CD8-positive, alpha-beta T cell (primary cell): ENCODE measurements at regions of chr13 and their contacts with region 1.

Region 1: DNA sequence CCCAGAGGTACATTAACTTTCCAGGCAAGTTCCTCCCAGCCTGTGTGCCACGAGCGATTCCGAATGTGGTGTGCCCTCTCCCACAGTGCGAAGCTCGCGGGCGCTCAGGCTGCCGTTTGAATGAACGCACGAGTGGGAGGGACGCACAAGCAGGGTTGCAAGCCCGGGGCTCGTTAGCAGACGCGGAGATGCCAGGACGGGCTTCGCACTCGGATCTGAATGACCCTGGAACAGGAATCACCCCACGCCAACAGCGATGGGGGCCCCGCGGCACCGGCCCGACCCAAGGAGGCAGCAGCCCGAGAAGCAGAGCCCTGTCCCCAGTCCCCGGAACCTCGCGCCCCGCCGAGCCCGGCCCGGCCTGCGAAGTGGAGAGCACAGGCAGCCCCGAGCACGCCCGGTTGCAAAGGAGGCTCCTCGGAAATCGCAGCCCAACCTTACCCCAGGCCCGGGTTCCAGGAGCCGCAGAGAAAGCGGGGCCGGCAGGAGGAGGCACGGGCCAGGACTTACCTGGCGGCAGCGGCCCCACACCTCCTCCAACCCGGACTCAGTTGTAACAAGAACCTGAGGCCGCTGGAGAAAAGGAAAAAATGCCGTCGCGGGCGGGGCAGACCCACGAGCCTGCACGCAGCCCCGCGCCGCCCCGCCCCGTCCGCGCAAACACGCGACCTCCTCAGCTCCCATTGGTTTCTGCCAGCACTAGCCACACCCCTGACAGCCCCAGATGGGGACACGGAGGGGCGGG is at the start of gene SLC25A30:
- DNase-seq: peak; percentile 83 to 96 (median 91)
- ATAC-seq: peak; percentile 90
- H3K4me3 ChIP-seq: peak within 1 kb of the TSS; percentile 88 to 97
- H3K4me3 Mint-ChIP-seq: peak within 1 kb of the TSS; percentile 94
- H3K27ac ChIP-seq: peak within 1 kb of the TSS; percentile 81 to 85
- H3K27ac Mint-ChIP-seq: peak within 1 kb of the TSS; percentile 96
- H3K4me1 ChIP-seq: peaks cover 24% of the 10 kb centered on the region
- H3K4me1 Mint-ChIP-seq: peaks cover 32% of the 10 kb centered on the region
- H3K27me3 ChIP-seq: no peaks in the 10 kb centered on the region
- H3K27me3 Mint-ChIP-seq: no peaks in the 10 kb centered on the region
- CTCF ChIP-seq: no peak
- total RNA-seq, gene SLC25A30: 37.7 to 40.5 TPM

Region 2: GRCh38 chr13:44843403-44843802 is 574.6 kb before region 1 on chr13:
- CTCF ChIA-PET with region 1: no interaction called
- POLR2A ChIA-PET with region 1: no interaction called
- intact Hi-C with region 1: no loop called
- DNase-seq: no peak
- ATAC-seq: no peak
- H3K4me3 ChIP-seq: no peak overlapping the region
- H3K4me3 Mint-ChIP-seq: no peak overlapping the region
- H3K27ac ChIP-seq: no peak overlapping the region
- H3K27ac Mint-ChIP-seq: no peak overlapping the region
- H3K4me1 ChIP-seq: no peaks in the 10 kb centered on the region
- H3K4me1 Mint-ChIP-seq: no peaks in the 10 kb centered on the region
- H3K27me3 ChIP-seq: no peaks in the 10 kb centered on the region
- H3K27me3 Mint-ChIP-seq: peaks cover 4% of the 10 kb centered on the region
- CTCF ChIP-seq: no peak

Region 3: DNA sequence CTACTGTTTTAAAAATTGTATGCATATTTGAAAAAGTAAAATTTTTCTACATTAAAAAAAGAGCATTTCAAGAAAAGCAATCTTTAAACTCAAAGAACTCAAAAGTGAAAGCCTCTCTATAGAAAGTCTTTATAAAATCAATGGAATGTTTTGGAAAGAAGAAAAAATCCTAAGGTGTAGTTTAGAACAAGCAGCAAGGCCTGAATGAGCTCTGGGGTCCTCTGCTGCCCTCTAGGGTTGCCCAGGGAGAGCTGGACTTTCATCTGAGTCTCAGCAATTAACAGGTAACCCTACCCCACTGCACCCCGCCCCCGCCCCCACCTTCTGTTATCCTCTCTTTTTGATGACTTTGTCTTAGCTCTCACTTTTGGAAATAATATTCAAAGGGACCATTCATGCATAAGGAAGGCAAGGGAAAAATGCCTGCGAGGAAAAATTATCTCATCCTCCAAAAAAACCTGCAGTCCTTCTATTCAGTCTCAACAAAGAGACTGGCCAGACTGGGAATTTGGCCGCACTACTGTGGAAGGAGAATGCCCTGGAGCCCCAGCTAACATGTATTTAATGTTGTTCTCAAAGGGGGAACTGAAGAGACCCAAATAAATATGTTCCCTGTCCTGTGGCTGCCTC is 23.9 kb before region 1 on chr13:
- CTCF ChIA-PET with region 1: interaction called, 5 read pairs
- POLR2A ChIA-PET with region 1: interaction called, 36 read pairs
- intact Hi-C with region 1: loop called in 1 of 2 experiments (anchors 2 kb)
- DNase-seq: peak in 4 of 9 experiments; percentile 31 to 69 (median 48)
- ATAC-seq: no peak
- H3K4me3 ChIP-seq: no peak overlapping the region
- H3K4me3 Mint-ChIP-seq: no peak overlapping the region
- H3K27ac ChIP-seq: no peak overlapping the region
- H3K27ac Mint-ChIP-seq: no peak overlapping the region
- H3K4me1 ChIP-seq: peaks cover 43% of the 10 kb centered on the region
- H3K4me1 Mint-ChIP-seq: peaks cover 46% of the 10 kb centered on the region
- H3K27me3 ChIP-seq: no peaks in the 10 kb centered on the region
- H3K27me3 Mint-ChIP-seq: no peaks in the 10 kb centered on the region
- CTCF ChIP-seq: peak; percentile 38

Region 4: DNA sequence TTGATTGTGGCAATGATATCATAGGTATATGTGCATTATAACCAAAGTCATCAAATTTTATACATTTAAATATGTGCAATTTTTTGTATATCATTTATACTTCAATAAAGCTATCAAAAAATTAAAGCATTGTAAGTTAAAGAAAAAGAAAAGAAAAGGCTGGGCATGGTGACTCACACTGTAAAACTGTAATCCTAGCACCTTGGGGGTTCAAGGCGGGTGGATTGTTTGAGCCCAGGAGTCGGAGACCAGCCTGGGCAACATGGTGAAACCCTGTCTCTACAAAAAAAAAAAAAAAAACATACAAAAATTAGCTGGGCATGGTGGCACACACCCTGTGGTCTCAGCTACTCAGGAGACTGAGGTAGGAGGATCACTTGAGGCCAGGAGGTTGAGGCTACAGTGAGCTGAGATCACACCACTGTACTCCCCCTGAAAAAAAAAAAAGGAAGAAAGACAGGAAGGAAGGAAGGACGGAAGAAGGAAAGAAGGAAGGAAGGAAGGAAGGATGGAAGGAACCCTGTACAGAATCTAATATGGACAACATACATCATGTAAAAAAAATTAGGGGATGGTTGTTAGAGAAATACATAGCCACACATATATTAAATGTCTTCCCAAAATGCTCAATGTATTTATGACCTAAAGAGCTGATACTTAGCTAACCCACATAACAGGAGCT is 22.0 kb after region 1 on chr13:
- CTCF ChIA-PET with region 1: no interaction called
- POLR2A ChIA-PET with region 1: interaction called, 10 read pairs
- intact Hi-C with region 1: no loop called
- DNase-seq: no peak
- ATAC-seq: no peak
- H3K4me3 ChIP-seq: no peak overlapping the region
- H3K4me3 Mint-ChIP-seq: no peak overlapping the region
- H3K27ac ChIP-seq: no peak overlapping the region
- H3K27ac Mint-ChIP-seq: no peak overlapping the region
- H3K4me1 ChIP-seq: peaks cover 3% of the 10 kb centered on the region
- H3K4me1 Mint-ChIP-seq: peaks cover 8% of the 10 kb centered on the region
- H3K27me3 ChIP-seq: no peaks in the 10 kb centered on the region
- H3K27me3 Mint-ChIP-seq: no peaks in the 10 kb centered on the region
- CTCF ChIP-seq: no peak

Region 5: DNA sequence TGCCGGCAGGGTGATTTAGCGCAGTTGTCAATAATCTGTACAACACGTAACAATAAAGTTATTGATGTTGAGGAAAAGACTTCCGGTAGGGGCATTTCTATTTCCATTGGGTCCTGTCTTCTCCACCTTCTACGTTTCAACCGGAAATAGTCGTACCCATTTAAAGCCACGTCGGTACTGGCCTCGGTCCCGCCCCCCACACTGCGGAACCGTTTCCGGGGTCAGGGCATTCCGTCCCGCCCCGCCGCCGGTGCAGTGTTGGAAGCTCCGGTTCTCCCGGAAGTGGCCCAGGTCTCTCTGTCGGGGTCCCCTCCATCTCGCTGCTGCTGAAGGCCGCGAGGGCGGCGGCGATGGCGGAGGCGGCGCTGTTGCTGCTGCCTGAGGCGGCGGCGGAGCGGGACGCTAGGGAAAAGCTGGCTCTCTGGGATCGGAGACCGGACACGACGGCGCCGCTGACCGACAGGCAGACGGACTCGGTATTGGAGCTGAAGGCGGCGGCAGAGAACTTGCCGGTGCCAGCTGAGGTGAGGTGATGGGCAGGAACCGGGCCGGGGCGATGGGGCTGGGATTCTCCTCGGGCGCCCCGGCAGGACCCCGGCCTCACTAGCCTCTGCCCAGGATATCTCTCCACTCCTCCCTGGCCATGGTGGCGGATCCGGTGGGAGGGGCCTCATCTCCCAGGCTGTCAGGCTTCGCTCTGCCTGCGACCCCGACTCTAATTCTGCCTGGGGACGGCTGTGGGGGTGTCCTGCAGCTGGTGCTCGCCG is 46.9 kb after region 1 on chr13 and contains the start of gene COG3:
- CTCF ChIA-PET with region 1: interaction called, 3 read pairs
- POLR2A ChIA-PET with region 1: interaction called, 21 read pairs
- intact Hi-C with region 1: loop called (anchors 1 kb)
- DNase-seq: peak; percentile 86 to 98 (median 94)
- ATAC-seq: peak; percentile 94
- H3K4me3 ChIP-seq: peak within 1 kb of the TSS; percentile 77 to 85
- H3K4me3 Mint-ChIP-seq: peak within 1 kb of the TSS; percentile 92
- H3K27ac ChIP-seq: peak within 1 kb of the TSS; percentile 82 to 95
- H3K27ac Mint-ChIP-seq: peak within 1 kb of the TSS; percentile 91
- H3K4me1 ChIP-seq: peaks cover 38% of the 10 kb centered on the region
- H3K4me1 Mint-ChIP-seq: peaks cover 49% of the 10 kb centered on the region
- H3K27me3 ChIP-seq: no peaks in the 10 kb centered on the region
- H3K27me3 Mint-ChIP-seq: no peaks in the 10 kb centered on the region
- CTCF ChIP-seq: peak; percentile 6
- total RNA-seq, gene COG3: 45.9 to 47.6 TPM

Region 6: GRCh38 chr13:46354156-46355091 is 936.5 kb after region 1 on chr13:
- CTCF ChIA-PET with region 1: no interaction called
- POLR2A ChIA-PET with region 1: no interaction called
- intact Hi-C with region 1: no loop called
- DNase-seq: peak in 2 of 9 experiments; percentile 16 to 38
- ATAC-seq: peak; percentile 48
- H3K4me3 ChIP-seq: no peak overlapping the region
- H3K4me3 Mint-ChIP-seq: no peak overlapping the region
- H3K27ac ChIP-seq: no peak overlapping the region
- H3K27ac Mint-ChIP-seq: no peak overlapping the region
- H3K4me1 ChIP-seq: no peaks in the 10 kb centered on the region
- H3K4me1 Mint-ChIP-seq: peaks cover 3% of the 10 kb centered on the region
- H3K27me3 ChIP-seq: no peaks in the 10 kb centered on the region
- H3K27me3 Mint-ChIP-seq: no peaks in the 10 kb centered on the region
- CTCF ChIP-seq: no peak